ENCODE measurements at regions of chr10 and their contacts with region 1.

Region 1: DNA sequence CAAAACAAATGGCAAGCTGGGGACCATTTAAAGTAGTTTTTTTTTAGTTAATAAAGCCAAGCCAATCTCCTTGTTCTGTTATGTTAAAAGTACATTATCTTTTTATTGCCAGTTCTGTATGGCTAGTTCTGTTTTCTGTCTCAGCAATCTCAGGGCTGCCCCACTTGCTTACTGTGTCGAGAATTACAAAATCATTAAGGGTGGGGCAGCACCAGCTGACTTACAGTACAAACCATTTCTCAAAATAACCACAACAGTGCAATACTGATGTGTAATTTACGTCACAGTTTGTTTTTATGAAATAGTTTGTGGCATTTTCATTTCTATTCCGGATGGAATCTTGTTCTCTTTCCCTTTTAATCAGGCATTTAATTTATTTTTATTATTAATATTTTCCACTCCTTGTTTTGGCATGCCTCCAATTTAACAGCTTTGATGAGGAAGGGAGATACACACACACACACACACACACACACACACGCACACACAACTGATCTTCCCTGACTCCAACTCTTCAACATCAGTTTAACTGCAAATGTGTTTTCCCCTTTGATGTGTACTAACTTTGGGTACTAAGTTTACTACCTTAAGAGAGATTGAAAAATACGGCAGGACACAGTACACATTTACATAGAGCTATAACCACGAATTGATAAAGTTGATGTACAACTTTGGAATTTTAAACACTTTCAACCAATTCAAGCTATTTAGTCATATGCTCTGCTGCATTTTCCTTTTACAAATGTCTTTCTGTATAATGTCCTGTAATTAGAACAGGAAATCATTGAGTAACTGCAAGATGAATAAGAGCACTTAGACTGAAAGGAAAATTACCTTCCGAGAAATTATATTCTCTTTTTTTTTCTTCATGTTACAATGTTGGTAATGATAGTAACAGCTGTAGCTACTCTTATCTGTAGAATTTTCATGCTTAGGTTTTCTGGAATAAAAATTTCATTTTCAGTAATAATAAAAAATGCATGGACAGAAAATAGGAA is 91.5 kb downstream of the ARID5B start:
- DNase-seq: peak; percentile 90
- H3K4me3 Mint-ChIP-seq: peak overlapping the region; percentile 75
- H3K27ac Mint-ChIP-seq: peak overlapping the region; percentile 96
- H3K4me1 Mint-ChIP-seq: peaks cover 38% of the 10 kb centered on the region
- H3K27me3 Mint-ChIP-seq: no peaks in the 10 kb centered on the region
- CTCF ChIP-seq: no peak

Region 2: GRCh38 chr10:61835069-61835945 is 157.7 kb before region 1 on chr10:
- CTCF ChIA-PET with region 1: no interaction called
- POLR2A ChIA-PET with region 1: no interaction called
- intact Hi-C with region 1: no loop called
- DNase-seq: peak; percentile 70
- H3K4me3 Mint-ChIP-seq: no peak overlapping the region
- H3K27ac Mint-ChIP-seq: peak overlapping the region; percentile 83
- H3K4me1 Mint-ChIP-seq: peaks cover 31% of the 10 kb centered on the region
- H3K27me3 Mint-ChIP-seq: no peaks in the 10 kb centered on the region
- CTCF ChIP-seq: peak; percentile 50

Region 3: DNA sequence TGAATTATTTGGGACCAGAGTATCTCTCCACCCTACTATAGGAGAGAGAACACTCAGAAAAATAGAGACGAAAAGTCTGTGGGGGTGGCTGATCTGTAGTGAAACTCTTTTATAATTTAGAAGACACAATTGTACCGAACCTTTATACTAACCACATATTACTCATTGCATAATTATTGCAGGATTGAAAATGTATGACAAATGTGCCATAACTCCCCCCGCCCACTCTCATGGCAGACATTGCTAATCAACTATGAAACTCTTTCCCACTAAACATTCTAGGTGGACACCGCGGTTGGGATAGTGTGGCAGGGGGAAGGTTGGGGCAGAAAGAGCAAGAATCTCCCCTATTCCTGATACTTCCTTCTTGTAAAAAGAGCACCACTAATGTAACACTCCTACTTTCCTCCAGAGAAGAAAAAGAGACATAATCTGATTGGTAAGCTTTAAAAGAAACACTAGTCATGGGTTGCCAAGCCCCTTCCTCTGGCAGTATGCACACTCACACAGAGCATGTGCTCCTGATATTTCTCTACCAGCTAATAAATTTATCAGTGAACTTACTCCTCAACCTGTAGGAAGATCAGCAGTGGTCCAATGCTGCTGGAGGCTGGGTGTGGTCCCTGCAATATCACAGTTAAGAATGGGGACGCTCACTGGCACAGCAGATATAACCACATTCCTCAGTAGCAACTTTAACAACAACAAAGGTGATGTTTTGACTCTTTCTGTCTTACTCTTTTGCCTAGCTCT is 110.2 kb before region 1 on chr10:
- CTCF ChIA-PET with region 1: no interaction called
- POLR2A ChIA-PET with region 1: no interaction called
- intact Hi-C with region 1: no loop called
- DNase-seq: no peak
- H3K4me3 Mint-ChIP-seq: no peak overlapping the region
- H3K27ac Mint-ChIP-seq: no peak overlapping the region
- H3K4me1 Mint-ChIP-seq: peaks cover 7% of the 10 kb centered on the region
- H3K27me3 Mint-ChIP-seq: no peaks in the 10 kb centered on the region
- CTCF ChIP-seq: no peak

Region 4: GRCh38 chr10:61937631-61938351 is 55.2 kb before region 1 on chr10:
- CTCF ChIA-PET with region 1: no interaction called
- POLR2A ChIA-PET with region 1: interaction called, 13 read pairs
- intact Hi-C with region 1: no loop called
- DNase-seq: no peak
- H3K4me3 Mint-ChIP-seq: no peak overlapping the region
- H3K27ac Mint-ChIP-seq: peak overlapping the region; percentile 93
- H3K4me1 Mint-ChIP-seq: peaks cover 27% of the 10 kb centered on the region
- H3K27me3 Mint-ChIP-seq: no peaks in the 10 kb centered on the region
- CTCF ChIP-seq: no peak

Region 5: DNA sequence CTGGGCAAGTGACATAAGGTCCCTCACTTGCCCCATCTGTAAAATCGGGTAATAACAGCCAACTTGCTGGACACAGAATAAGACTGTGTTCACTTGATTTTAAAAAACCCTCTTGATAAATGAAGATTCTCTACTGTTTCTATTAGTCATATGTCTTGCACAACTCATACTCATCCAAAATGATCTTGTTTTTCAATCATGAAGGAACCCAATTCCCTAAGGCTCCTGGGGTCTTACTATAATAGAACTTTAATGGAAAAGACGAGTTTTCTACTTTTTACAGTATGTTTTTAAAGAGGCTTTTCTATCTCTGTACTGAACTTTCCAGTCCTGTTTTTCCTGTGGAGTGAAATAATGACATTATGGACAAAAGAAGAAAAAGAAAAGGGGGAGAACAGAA is 12.3 kb after region 1 on chr10:
- CTCF ChIA-PET with region 1: no interaction called
- POLR2A ChIA-PET with region 1: interaction called, 18 read pairs
- intact Hi-C with region 1: no loop called
- DNase-seq: no peak
- H3K4me3 Mint-ChIP-seq: no peak overlapping the region
- H3K27ac Mint-ChIP-seq: no peak overlapping the region
- H3K4me1 Mint-ChIP-seq: peaks cover 14% of the 10 kb centered on the region
- H3K27me3 Mint-ChIP-seq: no peaks in the 10 kb centered on the region
- CTCF ChIP-seq: no peak

Region 6: GRCh38 chr10:62025901-62026879 is 33.2 kb after region 1 on chr10:
- CTCF ChIA-PET with region 1: interaction called, 4 read pairs
- POLR2A ChIA-PET with region 1: interaction called, 53 read pairs
- intact Hi-C with region 1: no loop called
- DNase-seq: no peak
- H3K4me3 Mint-ChIP-seq: no peak overlapping the region
- H3K27ac Mint-ChIP-seq: peak overlapping the region; percentile 72
- H3K4me1 Mint-ChIP-seq: peaks cover 39% of the 10 kb centered on the region
- H3K27me3 Mint-ChIP-seq: no peaks in the 10 kb centered on the region
- CTCF ChIP-seq: no peak

Region 7: GRCh38 chr10:62050893-62051433 is 58.0 kb after region 1 on chr10:
- CTCF ChIA-PET with region 1: interaction called, 3 read pairs
- POLR2A ChIA-PET with region 1: interaction called, 12 read pairs
- intact Hi-C with region 1: no loop called
- DNase-seq: peak; percentile 90
- H3K4me3 Mint-ChIP-seq: peak overlapping the region; percentile 84
- H3K27ac Mint-ChIP-seq: peak overlapping the region; percentile 96
- H3K4me1 Mint-ChIP-seq: peaks cover 28% of the 10 kb centered on the region
- H3K27me3 Mint-ChIP-seq: no peaks in the 10 kb centered on the region
- CTCF ChIP-seq: no peak

Measured in MCF 10A (cell line).